Cardiac septum (tissue), 1 donor: ENCODE measurements at regions of chr16 and their contacts with region 1.

Region 1: DNA sequence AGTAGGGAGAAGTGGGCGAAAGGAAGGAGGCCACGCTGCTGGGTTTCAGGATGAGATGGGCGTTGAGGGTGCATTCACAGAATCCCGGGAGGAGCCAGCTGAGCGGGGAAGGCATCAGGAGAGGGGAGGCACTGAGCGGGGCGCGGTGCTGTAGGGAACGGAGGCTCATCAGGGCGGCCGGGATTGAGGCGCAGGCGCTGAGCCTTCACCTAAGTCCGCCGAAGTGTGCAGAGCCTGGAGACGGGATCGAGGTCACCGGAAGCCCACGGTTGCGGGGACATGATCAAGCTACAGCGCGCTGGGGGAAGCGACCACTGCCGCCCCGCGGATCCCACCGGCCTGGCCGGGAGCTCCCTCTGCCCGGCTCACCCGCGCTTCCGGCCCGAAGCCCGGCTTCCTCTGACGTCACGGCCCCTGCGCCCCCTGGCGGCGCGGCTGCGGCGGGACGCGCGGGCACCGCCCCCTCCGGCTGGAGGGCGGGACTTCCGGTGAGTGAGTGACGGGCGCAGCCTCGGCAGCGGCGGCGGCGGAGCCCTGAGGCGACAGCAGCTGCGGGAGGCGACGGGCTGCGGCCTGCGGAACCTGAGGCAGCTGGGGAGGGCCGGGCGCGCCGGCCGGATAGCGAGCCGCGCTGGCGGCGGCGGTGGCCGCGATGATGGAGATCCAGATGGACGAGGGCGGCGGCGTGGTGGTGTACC is at the start of gene MAPK8IP3:
- DNase-seq: peak; percentile 98
- total RNA-seq, gene MAPK8IP3: 71.4 TPM

Region 2: GRCh38 chr16:1610276-1611017 is 95.4 kb before region 1 on chr16:
- intact Hi-C with region 1: loop called (anchors 2 kb)
- DNase-seq: peak; percentile 90

Region 3: DNA sequence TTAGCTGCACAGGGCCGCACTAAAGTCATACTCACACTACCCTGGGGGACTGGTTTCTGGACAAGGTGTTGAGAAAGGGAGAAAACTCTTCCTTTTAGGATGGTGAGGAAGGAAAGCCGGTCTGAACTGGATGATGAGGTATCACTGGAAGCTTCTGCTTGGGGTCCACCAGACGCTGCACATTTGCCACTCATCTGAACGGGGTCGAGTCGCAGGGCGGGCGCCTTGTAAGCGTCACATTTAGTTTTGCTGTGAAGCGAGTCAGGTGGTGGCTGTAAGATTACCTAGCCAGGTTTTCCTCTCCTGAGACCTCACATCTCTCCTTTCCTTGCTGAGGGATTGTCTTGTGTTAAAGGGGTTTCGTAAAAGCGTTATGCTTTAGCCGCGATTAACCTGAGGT is 25.5 kb before region 1 on chr16:
- intact Hi-C with region 1: loop called (anchors 1 kb)
- DNase-seq: no peak

Region 4: DNA sequence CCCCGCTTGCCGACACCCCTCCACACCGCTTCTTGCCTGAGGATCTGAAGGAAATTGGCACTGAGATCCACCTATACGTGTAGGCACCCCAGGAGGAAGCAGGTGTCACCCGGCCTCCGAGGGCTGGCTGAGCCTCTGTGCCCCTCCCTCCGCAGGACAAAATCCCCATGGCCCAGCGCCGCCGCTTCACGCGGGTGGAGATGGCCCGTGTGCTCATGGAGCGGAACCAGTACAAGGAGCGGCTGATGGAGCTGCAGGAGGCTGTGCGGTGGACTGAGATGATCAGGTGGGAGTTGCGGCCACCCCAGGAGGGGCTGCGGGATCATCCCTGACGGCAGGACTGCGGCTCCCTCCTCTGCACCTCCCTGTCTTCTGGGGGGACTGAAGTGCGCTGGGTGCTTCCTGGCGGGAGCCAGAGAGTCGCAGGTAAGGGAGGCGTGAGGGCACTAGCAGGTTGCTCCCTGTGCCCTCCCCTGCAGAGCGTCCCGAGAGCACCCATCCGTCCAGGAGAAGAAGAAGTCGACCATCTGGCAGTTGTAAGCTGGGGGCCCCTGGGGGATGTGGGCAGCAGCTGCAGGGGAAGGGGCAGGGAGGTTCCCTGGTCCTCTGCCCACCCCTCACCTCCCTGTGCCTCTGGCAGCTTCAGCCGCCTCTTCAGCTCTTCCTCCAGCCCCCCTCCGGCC is 56.5 kb after region 1 on chr16:
- intact Hi-C with region 1: no loop called
- DNase-seq: no peak

Region 5: DNA sequence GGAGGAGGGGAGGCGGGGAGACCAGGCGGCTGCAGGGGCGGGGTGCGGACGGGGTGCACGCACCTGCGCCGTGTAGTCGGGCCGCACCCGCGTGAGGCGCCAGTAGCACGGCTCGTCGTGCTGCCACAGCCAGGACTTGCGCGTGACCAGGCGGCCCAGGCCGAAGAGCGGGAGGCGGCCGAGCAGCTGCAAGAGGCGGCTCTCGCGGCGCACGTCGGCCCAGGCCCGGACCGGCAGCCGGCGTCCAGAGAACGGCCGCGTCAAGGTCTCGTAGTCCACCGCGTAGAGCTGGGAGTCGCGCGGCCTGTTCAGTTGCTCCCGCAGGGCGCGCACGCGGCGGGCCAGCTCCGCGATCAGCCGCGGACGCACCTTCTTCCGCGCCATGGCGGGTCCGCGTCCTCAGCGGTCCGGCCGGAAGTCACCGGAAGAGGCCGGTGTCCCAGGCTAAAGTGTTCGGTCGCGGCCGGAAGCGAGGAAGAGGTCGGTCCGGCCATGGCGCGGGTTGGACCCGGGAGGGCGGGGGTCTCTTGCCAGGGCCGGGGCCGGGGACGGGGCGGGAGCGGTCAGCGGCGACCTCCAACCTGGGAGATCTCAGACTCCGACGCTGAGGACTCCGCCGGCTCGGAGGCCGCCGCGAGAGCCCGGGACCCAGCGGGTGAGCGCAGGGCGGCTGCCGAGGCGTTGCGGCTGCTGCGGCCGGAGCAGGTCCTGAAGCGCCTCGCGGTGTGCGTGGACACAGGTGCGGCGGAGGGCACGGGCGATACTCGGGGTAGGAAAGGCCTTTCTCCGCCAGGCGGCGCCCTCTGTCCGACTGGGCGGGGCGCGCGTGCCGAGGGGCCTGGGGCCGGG is 67.1 kb after region 1 on chr16 and contains the starts of genes EME2 and MRPS34:
- intact Hi-C with region 1: loop called (anchors 5 kb)
- DNase-seq: peak; percentile 91
- total RNA-seq, gene EME2: 14.9 TPM
- total RNA-seq, gene MRPS34: 63.4 TPM